ENCODE measurements at regions of chr7 and their contacts with region 1.

Region 1: GRCh38 chr7:104943502-104944343 is 70.3 kb upstream of the KMT2E start:
- DNase-seq: peak; percentile 93
- H3K4me3 Mint-ChIP-seq: peak overlapping the region; percentile 97
- H3K27ac Mint-ChIP-seq: peak overlapping the region; percentile 100
- H3K4me1 Mint-ChIP-seq: peaks cover 56% of the 10 kb centered on the region
- H3K27me3 Mint-ChIP-seq: peaks cover 3% of the 10 kb centered on the region

Region 2: DNA sequence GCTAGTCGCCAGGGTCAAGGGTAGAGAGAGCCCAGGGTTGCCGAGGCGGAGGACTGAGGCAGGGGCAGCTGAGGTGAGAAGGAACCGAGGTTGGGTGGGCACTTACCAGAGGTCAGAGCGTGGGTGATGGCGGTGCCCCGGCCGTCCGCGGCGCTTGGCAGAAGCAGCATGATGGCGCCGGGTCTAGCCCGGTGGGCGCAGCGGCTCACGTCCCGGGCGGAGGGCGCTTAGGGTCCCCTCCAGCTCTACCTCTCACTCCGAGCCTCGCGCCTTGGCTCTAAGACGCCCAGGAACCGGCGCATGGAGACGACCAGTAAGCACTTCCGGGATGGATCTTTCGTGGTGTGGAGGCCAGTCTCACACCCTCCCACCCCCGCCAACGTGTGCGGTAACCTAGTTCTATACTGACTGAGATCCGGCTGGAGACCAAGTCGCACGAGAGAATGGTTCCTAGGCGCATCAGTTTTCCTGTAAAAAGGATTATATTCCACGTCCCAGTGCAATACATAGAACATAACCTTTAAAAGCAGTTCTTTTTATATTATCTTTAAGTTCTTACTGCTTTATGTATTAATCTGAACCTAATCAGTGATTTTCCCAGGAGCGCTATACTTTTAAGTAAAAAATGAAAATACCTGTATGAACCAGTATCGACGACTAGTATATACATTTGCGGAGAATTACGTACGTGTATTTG is 1599.1 kb before region 1 on chr7 and contains the start of gene DNAJC2:
- intact Hi-C with region 1: loop called (anchors 10 kb)
- DNase-seq: peak; percentile 95
- H3K4me3 Mint-ChIP-seq: peak within 1 kb of the TSS; percentile 100
- H3K27ac Mint-ChIP-seq: peak within 1 kb of the TSS; percentile 99
- H3K4me1 Mint-ChIP-seq: peaks cover 50% of the 10 kb centered on the region
- H3K27me3 Mint-ChIP-seq: no peaks in the 10 kb centered on the region
- total RNA-seq, gene DNAJC2: 67.1 and 68.7 TPM in 2 replicates

Region 3: DNA sequence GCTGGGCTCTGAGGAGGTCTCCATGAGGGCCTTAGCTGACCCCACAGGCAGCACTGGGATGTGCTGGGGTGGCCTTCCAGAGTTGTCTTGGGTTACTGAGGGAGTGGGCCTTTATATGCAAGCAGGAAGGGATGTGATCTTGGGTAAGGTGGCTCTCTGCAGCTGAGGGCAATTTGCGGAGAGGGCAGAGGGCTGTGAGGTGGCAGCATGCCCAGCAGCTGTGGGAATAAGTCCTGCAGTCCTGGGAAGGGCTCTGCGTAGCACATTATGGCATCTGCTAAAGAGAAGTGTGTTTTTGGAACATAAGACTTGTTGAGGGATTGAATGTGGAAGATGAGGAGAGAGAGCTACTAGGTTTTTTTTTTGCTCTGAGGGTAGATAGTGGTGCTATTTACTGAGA is 29.3 kb before region 1 on chr7:
- intact Hi-C with region 1: no loop called
- DNase-seq: no peak
- H3K4me3 Mint-ChIP-seq: no peak overlapping the region
- H3K27ac Mint-ChIP-seq: no peak overlapping the region
- H3K4me1 Mint-ChIP-seq: no peaks in the 10 kb centered on the region
- H3K27me3 Mint-ChIP-seq: peaks cover 29% of the 10 kb centered on the region

Region 4: DNA sequence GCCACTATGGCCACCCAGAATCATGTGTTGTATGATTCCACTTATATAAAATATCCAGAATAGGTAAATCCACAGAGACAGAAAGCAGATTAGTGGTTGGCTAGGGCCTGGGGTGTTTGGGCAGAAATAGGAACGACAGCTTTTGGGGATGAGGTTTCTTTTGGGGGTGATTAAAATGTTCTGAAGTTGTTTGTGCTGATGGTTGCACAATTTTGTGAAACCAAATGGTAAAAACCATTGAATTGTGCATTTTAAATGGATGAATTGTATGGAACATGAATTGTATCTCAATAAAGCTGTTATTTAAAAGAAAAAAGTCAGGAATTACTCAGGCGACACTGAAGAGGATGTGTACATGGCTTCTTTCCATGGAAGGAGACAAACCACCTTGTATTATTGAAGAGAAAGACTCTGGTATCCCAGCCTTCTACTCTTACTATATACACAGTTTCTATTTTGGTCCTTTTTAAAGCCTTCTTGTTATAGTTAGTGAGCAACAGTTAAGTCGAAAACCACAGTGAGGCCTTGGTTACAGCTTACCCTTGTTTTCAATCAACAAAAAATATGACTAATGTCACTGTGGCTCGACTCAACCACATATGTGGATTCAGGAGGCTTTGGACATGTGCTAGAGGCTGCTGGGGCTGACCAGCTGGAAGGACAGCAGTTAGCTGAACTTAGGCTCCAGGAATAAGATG is 13.2 kb after region 1 on chr7:
- intact Hi-C with region 1: loop called (anchors 1 kb)
- DNase-seq: peak; percentile 88
- H3K4me3 Mint-ChIP-seq: peak overlapping the region; percentile 72
- H3K27ac Mint-ChIP-seq: peak overlapping the region; percentile 100
- H3K4me1 Mint-ChIP-seq: peaks cover 50% of the 10 kb centered on the region
- H3K27me3 Mint-ChIP-seq: no peaks in the 10 kb centered on the region

Region 5: GRCh38 chr7:105013221-105013815 is 69.6 kb after region 1 on chr7:
- intact Hi-C with region 1: loop called (anchors 1 kb)
- DNase-seq: peak; percentile 98
- H3K4me3 Mint-ChIP-seq: peak overlapping the region; percentile 99
- H3K27ac Mint-ChIP-seq: peak overlapping the region; percentile 100
- H3K4me1 Mint-ChIP-seq: peaks cover 43% of the 10 kb centered on the region
- H3K27me3 Mint-ChIP-seq: peaks cover 2% of the 10 kb centered on the region

Region 6: GRCh38 chr7:105346593-105347322 is 403.0 kb after region 1 on chr7:
- intact Hi-C with region 1: loop called (anchors 10 kb)
- DNase-seq: peak; percentile 81
- H3K4me3 Mint-ChIP-seq: peak overlapping the region; percentile 56
- H3K27ac Mint-ChIP-seq: peak overlapping the region; percentile 60
- H3K4me1 Mint-ChIP-seq: peaks cover 42% of the 10 kb centered on the region
- H3K27me3 Mint-ChIP-seq: no peaks in the 10 kb centered on the region

Region 7: DNA sequence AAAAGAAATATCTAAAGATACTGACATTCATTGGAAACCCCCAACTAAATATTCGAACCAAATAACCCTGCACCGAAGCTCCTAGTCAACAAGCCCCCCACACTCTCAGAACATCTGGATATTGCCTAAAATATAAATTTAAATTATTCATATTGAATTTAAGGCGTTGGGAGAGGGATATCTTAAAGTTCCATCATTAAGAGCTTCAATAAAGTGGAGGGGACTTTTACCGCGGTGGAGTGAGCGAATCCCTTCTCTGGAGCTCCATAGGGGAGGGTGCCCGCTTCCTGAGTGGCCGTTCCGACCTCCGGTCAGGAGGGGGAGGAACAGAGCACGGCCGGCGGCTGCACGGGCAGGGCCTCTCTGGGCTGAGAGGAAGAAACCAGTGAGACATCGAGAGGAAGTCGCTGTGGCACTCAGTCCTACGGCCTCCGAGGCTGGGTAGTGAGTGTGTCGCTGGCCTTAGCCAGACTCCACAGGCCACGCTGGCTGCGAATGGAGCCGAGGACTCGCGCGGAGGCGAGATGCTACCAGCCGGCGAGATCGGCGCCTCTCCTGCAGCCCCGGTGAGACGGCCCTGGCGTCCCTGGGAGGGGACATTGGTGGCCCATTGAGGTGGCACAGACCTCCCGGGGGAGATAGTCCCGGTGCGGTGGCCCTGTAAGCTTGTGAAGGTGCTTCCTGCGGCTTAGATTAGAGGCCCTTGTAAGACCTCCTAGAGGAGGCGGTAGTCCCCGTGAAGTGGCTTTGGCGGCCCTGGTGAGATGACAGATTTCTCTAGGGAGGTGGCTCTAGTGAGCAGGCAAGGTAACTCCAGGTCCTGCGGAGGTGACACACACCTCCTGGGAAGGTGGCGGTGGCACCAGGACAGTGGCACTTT is 588.3 kb after region 1 on chr7 and contains the start of gene RINT1:
- intact Hi-C with region 1: loop called (anchors 5 kb)
- DNase-seq: peak; percentile 97
- H3K4me3 Mint-ChIP-seq: peak within 1 kb of the TSS; percentile 93
- H3K27ac Mint-ChIP-seq: peak within 1 kb of the TSS; percentile 93
- H3K4me1 Mint-ChIP-seq: peaks cover 25% of the 10 kb centered on the region
- H3K27me3 Mint-ChIP-seq: no peaks in the 10 kb centered on the region
- total RNA-seq, gene RINT1: 28.5 and 29.4 TPM in 2 replicates

Measured in activated CD4-positive, alpha-beta T cell treated with anti-CD3 and anti-CD28 coated beads, Interleukin-2, amount 10 ng/mL, durations not matched to agents 24 days and 14 days (primary cell).